ENCODE measurements at regions of chr2 and their contacts with region 1.

Region 1: GRCh38 chr2:220687231-220687843 is 884.8 kb downstream of the EPHA4 start:
- DNase-seq: peak; percentile 84
- ATAC-seq: peak; percentile 79
- H3K4me3 ChIP-seq: no peak overlapping the region
- H3K27ac ChIP-seq: no peak overlapping the region
- H3K4me1 ChIP-seq: peaks cover 5% of the 10 kb centered on the region; the same call in 1 of the 2 replicates
- H3K27me3 ChIP-seq: no peaks in the 10 kb centered on the region
- CTCF ChIP-seq: peak; percentile 95

Region 2: DNA sequence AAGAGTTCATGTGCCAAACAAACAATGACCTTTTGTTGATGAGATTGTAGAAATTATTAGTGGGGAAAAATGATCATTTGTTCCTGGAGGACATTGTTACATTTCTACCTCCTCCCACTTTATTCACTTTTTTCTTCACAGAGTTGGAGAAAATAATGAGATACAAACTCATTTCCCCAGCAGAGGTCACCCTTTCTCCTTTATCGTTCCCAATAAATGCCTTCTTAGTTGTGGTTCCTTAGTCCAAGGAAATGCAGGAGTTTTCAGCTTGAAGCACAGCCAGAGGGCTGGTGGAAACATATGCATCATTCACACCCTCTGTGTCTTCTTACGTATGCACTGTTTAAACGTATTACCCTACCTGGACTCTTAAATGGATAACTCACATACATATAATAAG is 951.1 kb before region 1 on chr2:
- CTCF ChIA-PET with region 1: no interaction called
- POLR2A ChIA-PET with region 1: no interaction called
- intact Hi-C with region 1: loop called (anchors 1 kb)
- DNase-seq: peak; percentile 86
- ATAC-seq: peak; percentile 74
- H3K4me3 ChIP-seq: no peak overlapping the region
- H3K27ac ChIP-seq: no peak overlapping the region
- H3K4me1 ChIP-seq: no peaks in the 10 kb centered on the region
- H3K27me3 ChIP-seq: no peaks in the 10 kb centered on the region
- CTCF ChIP-seq: peak; percentile 78

Region 3: GRCh38 chr2:220165401-220165800 is 521.9 kb before region 1 on chr2:
- CTCF ChIA-PET with region 1: no interaction called
- POLR2A ChIA-PET with region 1: no interaction called
- intact Hi-C with region 1: loop called (anchors 5 kb)
- DNase-seq: peak; percentile 58
- ATAC-seq: peak; percentile 51
- H3K4me3 ChIP-seq: no peak overlapping the region
- H3K27ac ChIP-seq: no peak overlapping the region
- H3K4me1 ChIP-seq: peaks cover 12% of the 10 kb centered on the region
- H3K27me3 ChIP-seq: no peaks in the 10 kb centered on the region
- CTCF ChIP-seq: peak; percentile 47

Region 4: DNA sequence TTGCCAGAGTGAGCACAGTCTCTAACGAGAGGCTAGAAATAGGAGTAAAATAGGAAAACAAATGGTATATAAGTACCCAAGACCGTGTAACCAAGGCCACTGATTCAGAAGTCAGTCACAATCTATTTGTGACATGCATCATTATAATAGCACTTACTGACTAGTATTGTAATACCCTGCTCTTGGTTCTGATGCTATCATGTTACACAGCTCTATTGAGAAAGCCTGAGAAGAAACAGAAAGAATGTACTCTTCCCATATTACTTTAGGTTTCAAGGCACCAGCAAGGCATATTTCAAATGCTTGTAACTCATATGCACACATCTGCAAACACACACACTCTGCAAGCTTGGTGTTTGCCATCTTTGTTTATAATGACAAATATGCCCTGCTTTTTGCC is 313.5 kb before region 1 on chr2:
- CTCF ChIA-PET with region 1: no interaction called
- POLR2A ChIA-PET with region 1: no interaction called
- intact Hi-C with region 1: loop called (anchors 10 kb)
- DNase-seq: peak; percentile 14
- ATAC-seq: no peak
- H3K4me3 ChIP-seq: no peak overlapping the region
- H3K27ac ChIP-seq: no peak overlapping the region
- H3K4me1 ChIP-seq: no peaks in the 10 kb centered on the region
- H3K27me3 ChIP-seq: no peaks in the 10 kb centered on the region
- CTCF ChIP-seq: no peak

Region 5: DNA sequence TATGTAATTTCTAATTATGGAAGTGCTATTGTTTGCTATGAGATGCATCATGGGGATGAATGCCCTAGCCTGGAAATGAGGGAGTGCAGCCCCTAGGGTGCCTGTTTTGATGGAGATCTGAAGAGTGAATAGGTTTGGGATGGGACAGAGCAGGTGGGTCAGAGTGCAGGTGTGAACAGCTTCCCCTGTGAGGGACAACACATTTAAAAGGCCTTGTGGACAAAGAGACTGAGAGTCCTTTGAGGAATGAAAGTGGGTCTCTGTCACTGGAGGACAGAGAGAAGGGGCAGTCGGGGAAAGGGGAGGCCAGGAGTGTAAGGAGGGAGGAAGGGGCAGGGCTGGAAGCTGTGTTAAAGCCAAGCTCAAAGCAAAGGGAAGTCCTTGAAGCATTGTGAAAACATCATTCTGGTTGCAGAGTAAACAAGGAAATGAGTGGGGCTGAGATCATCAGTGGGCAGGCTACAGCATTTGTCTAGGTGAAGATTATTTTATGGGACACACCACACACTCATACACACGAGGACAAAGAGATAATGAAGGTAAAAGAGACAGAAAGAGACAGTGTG is 182.3 kb before region 1 on chr2:
- CTCF ChIA-PET with region 1: no interaction called
- POLR2A ChIA-PET with region 1: interaction called, 12 read pairs
- intact Hi-C with region 1: loop called (anchors 10 kb)
- DNase-seq: peak; percentile 86
- ATAC-seq: peak; percentile 85
- H3K4me3 ChIP-seq: no peak overlapping the region
- H3K27ac ChIP-seq: peak overlapping the region; percentile 68
- H3K4me1 ChIP-seq: peaks cover 50% of the 10 kb centered on the region
- H3K27me3 ChIP-seq: no peaks in the 10 kb centered on the region
- CTCF ChIP-seq: no peak

Region 6: GRCh38 chr2:220736777-220737176 is 49.4 kb after region 1 on chr2:
- CTCF ChIA-PET with region 1: no interaction called
- POLR2A ChIA-PET with region 1: no interaction called
- intact Hi-C with region 1: no loop called
- DNase-seq: no peak
- ATAC-seq: no peak
- H3K4me3 ChIP-seq: no peak overlapping the region
- H3K27ac ChIP-seq: no peak overlapping the region
- H3K4me1 ChIP-seq: no peaks in the 10 kb centered on the region
- H3K27me3 ChIP-seq: no peaks in the 10 kb centered on the region
- CTCF ChIP-seq: no peak

Region 7: GRCh38 chr2:220935789-220936321 is 248.5 kb after region 1 on chr2:
- CTCF ChIA-PET with region 1: no interaction called
- POLR2A ChIA-PET with region 1: no interaction called
- intact Hi-C with region 1: no loop called
- DNase-seq: peak; percentile 65
- ATAC-seq: peak; percentile 94
- H3K4me3 ChIP-seq: no peak overlapping the region
- H3K27ac ChIP-seq: peak overlapping the region; percentile 38
- H3K4me1 ChIP-seq: peaks cover 18% of the 10 kb centered on the region
- H3K27me3 ChIP-seq: no peaks in the 10 kb centered on the region
- CTCF ChIP-seq: no peak

Region 8: GRCh38 chr2:221068108-221068507 is 380.8 kb after region 1 on chr2:
- CTCF ChIA-PET with region 1: no interaction called
- POLR2A ChIA-PET with region 1: no interaction called
- intact Hi-C with region 1: loop called (anchors 1 kb)
- DNase-seq: peak; percentile 3
- ATAC-seq: peak; percentile 51
- H3K4me3 ChIP-seq: no peak overlapping the region
- H3K27ac ChIP-seq: no peak overlapping the region
- H3K4me1 ChIP-seq: no peaks in the 10 kb centered on the region
- H3K27me3 ChIP-seq: no peaks in the 10 kb centered on the region
- CTCF ChIP-seq: peak; percentile 33; the same call in 1 of the 2 replicates

Region 9: GRCh38 chr2:221969087-221969829 is 1281.9 kb after region 1 on chr2:
- CTCF ChIA-PET with region 1: no interaction called
- POLR2A ChIA-PET with region 1: no interaction called
- intact Hi-C with region 1: loop called (anchors 2 kb)
- DNase-seq: peak; percentile 63
- ATAC-seq: peak; percentile 84
- H3K4me3 ChIP-seq: no peak overlapping the region
- H3K27ac ChIP-seq: no peak overlapping the region
- H3K4me1 ChIP-seq: no peaks in the 10 kb centered on the region
- H3K27me3 ChIP-seq: 0 out of 2 replicates have a peak, but pooled peaks cover 2% of the 10 kb centered on the region
- CTCF ChIP-seq: peak; percentile 77